Activated B cell treated with CpG ODN at 0.5 μM for 24 hours (primary cell): ENCODE measurements at regions of chr2 and their contacts with region 1.

Region 1: DNA sequence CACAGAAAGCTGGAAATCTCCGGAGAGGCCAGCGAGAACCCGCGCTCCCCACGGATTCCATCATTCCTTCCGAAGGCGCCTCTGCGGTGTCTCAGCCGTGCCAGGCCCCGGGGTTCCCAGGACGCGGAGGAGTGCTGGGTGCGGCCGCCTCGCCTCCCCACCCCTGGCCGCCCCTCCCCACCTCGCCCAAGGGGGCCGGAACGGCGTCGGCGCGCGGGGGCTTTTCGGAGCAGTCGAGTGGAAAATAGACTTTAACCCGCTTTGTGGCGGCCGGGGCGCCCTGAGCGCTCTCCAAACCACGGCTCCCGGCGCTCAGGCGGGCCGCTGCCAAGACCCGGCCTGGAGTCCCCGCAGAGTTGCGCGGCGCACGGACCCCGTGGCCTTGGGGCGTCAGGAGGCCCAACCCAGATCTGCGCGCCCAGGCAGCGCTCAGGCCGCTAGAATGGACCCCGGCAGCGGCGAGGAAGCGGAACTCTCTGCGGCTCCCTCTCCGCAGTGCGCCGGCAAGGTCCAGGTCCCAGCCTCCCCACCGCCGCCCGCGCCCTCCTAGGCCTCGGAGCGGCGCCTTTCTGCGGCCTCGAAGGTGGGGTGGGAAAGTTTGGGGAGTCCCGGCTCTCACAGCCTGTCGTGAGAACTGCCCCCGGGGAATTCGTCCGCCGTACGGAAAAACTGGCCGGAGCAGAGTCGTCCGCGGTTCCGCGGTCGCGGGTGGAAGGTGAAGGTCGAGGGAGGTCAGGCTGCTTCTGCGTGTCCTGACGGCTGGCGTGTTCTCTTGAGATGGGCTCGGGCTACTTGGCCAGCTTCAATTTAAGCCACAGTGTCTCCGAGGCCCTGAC is 1.2 kb upstream of the EMX1 start:
- DNase-seq: peak; percentile 48
- ATAC-seq: peak; percentile 50
- H3K4me3 Mint-ChIP-seq: peak overlapping the region; percentile 81
- H3K27ac Mint-ChIP-seq: no peak overlapping the region
- H3K4me1 Mint-ChIP-seq: peaks cover 35% of the 10 kb centered on the region
- H3K27me3 Mint-ChIP-seq: peaks cover 65% of the 10 kb centered on the region
- CTCF ChIP-seq: no peak

Region 2: DNA sequence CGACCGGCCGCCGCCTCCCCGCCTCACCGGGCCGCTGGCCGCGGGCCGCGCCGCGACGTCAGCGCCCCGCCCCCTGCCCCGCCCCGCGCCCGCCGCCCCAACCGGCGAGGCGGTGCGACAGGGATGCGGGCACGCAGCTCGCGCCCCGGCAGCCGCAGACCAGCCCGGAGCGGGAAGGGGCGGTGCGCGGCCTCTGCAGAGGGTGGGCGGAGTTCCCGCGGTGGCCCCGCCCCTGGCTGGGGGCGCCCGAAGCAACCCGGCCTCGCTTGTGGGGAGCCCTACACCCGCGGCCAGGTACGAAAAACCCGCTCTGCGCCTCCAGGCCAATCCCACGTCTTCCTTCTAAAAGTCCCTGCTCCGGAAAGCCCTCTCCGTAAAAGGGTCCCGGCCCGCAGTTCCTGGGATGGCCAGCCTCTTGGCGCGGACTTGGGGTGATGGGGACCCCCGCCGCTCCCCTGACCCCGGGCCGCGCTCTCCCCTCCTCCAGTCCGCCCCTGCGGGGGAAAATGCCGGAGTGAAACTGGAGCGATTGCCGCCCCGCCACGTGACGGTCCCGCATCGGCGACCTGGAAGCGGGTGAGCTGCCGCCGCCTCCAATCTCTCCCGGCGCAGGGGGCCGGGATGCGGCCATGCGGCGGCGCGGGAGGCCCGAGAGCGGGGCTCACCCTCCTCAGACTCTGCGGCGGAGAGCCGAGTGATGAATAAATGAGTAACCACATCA is 196.9 kb after region 1 on chr2 and contains the start of gene RAB11FIP5:
- CTCF ChIA-PET with region 1: no interaction called
- POLR2A ChIA-PET with region 1: no interaction called
- intact Hi-C with region 1: loop called (anchors 5 kb)
- DNase-seq: peak; percentile 75
- ATAC-seq: peak; percentile 91
- H3K4me3 Mint-ChIP-seq: peak within 1 kb of the TSS; percentile 77
- H3K27ac Mint-ChIP-seq: peak within 1 kb of the TSS; percentile 59
- H3K4me1 Mint-ChIP-seq: peaks cover 11% of the 10 kb centered on the region
- H3K27me3 Mint-ChIP-seq: no peaks in the 10 kb centered on the region
- CTCF ChIP-seq: no peak
- total RNA-seq, gene RAB11FIP5: 3.2 and 3.5 TPM in 2 replicates

Region 3: DNA sequence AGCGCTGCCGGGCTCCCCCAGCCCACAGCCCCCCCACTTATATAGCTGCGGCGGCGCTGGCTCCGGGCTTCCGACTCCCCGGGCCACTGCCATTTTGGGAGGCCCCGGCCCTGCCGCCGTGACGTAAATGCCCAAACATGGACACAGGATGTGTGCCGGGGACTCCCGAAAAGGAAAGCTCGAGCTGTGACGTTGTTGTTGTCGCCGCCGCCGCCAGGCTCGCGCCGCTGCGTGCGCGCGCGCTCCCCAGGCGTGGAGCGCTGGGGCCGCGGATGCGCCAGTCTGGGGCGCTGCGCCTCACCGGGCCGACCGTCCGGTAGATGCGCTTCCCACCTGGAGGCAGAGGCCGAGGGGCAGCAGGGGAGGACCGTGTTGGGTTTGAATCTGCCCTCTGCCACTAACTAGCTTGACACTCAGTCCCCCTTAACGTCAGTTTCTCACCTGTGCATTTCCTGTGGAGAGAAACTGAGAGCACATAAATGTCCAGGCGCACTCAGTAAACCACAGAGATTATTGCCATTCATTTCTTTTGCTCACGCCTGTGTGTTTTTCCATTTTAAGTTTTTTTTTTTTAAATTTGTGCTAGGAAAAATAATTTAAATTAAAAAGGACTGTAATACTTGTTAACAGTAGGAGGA is 377.5 kb after region 1 on chr2 and contains the start of gene EGR4:
- CTCF ChIA-PET with region 1: no interaction called
- POLR2A ChIA-PET with region 1: no interaction called
- intact Hi-C with region 1: loop called (anchors 5 kb)
- DNase-seq: peak; percentile 68
- ATAC-seq: peak; percentile 87
- H3K4me3 Mint-ChIP-seq: peak within 1 kb of the TSS; percentile 77
- H3K27ac Mint-ChIP-seq: no peak within 1 kb of the TSS
- H3K4me1 Mint-ChIP-seq: peaks cover 28% of the 10 kb centered on the region
- H3K27me3 Mint-ChIP-seq: peaks cover 41% of the 10 kb centered on the region
- CTCF ChIP-seq: no peak
- total RNA-seq, gene EGR4: 0.20 TPM in 1 of 2 replicates, not detected in the other